Activated T-helper 2 cell treated with anti-CD3 and anti-CD28 coated beads, Interferon-gamma antibody, Interleukin-2, Interleukin-4, amounts not matched to agents 10 μg/mL and 5 μg/mL and 100 μg/mL, durations not matched to agents 14 hours and 24 hours and 36 hours (primary cell): ENCODE measurements at regions of chr11 and their contacts with region 1.

Region 1: GRCh38 chr11:119067371-119068222 is at the start of gene VPS11:
- DNase-seq: peak; percentile 98
- H3K4me3 Mint-ChIP-seq: peak within 1 kb of the TSS; percentile 92
- H3K27ac Mint-ChIP-seq: peak within 1 kb of the TSS; percentile 97
- H3K4me1 Mint-ChIP-seq: peaks cover 23% of the 10 kb centered on the region
- H3K27me3 Mint-ChIP-seq: no peaks in the 10 kb centered on the region
- total RNA-seq, gene VPS11: 24.3 and 25.8 TPM in 2 replicates

Region 2: GRCh38 chr11:118918128-118918685 is 149.4 kb before region 1 on chr11:
- intact Hi-C with region 1: no loop called
- DNase-seq: no peak
- H3K4me3 Mint-ChIP-seq: peak overlapping the region; percentile 66
- H3K27ac Mint-ChIP-seq: peak overlapping the region; percentile 93
- H3K4me1 Mint-ChIP-seq: peaks cover 77% of the 10 kb centered on the region
- H3K27me3 Mint-ChIP-seq: no peaks in the 10 kb centered on the region

Region 3: DNA sequence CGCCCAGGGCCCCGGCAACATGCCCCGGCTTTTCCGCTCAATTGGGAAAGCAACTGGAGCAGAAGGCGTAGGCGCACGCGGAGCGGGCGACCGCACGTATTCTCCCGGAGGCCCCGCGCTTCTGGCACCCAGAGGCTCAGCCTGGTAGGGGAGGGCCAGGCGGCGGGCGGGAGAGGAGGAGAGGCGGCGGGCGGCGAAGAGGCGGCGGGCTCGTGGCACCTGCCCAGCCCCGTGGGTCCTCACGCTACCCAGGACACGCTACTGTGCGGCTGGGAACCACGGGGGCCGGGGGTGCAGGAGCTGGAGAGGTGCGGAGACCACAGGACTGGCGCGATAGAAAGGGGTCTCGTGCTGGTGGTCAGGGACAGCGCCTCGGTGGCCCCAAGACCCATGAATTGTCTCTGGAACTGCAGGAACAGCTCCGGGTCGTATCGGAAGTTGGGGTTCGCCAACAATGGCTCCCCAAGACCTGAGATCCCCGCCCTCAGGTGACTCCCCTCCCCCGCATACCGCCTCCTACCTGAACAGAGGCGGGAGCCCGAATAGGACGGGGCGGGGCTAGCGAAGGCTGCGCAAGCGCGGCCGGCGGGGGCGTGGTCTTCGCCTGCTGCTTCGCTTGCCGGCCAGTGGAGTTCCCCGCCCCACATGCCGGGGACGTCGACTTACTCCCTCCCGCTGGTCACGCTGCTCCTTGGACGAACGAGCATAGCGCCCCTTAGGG is 37.1 kb before region 1 on chr11 and contains the start of gene SLC37A4:
- intact Hi-C with region 1: loop called (anchors 1 kb)
- DNase-seq: peak; percentile 98
- H3K4me3 Mint-ChIP-seq: peak within 1 kb of the TSS; percentile 75
- H3K27ac Mint-ChIP-seq: peak within 1 kb of the TSS; percentile 65
- H3K4me1 Mint-ChIP-seq: peaks cover 15% of the 10 kb centered on the region
- H3K27me3 Mint-ChIP-seq: no peaks in the 10 kb centered on the region
- total RNA-seq, gene SLC37A4: 31.7 and 34.4 TPM in 2 replicates

Region 4: DNA sequence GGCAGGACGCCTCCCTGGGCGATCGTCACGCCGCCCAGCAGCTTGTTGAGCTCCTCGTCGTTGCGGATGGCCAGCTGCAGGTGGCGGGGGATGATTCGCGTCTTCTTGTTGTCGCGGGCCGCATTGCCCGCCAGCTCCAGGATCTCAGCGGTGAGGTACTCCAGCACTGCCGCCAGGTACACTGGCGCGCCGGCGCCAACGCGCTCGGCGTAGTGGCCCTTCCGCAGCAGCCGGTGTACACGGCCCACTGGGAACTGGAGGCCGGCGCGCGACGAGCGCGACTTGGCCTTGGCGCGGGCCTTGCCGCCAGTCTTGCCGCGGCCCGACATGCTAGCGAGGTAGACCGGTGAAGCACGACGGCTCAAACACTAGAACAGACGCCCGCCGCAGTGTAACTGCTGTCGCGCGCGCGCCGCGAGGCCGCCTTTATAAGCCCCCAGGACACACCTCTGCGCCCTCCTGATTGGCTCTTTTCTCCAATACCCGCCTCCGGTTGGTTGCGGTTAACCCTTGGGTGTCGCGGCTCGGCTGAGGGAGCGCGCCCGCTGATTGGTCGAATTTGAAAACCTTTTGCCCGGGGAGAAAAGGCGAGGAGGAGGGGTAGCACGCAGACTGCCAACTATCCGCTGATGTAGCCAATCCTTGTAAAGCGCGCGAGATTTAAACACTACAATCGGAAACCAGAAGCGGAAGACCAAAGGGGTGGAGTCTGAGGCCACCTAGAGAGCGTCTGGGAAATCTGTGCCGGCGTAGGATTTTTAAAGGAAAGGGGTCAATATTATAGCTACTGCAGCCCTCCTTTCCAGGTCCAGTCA is 27.7 kb after region 1 on chr11:
- intact Hi-C with region 1: loop called (anchors 2 kb)
- DNase-seq: peak; percentile 99
- H3K4me3 Mint-ChIP-seq: peak overlapping the region; percentile 89
- H3K27ac Mint-ChIP-seq: peak overlapping the region; percentile 89
- H3K4me1 Mint-ChIP-seq: peaks cover 50% of the 10 kb centered on the region
- H3K27me3 Mint-ChIP-seq: peaks cover 2% of the 10 kb centered on the region

Region 5: GRCh38 chr11:119168471-119169281 is 101.1 kb after region 1 on chr11 and contains the start of gene NLRX1:
- intact Hi-C with region 1: loop called (anchors 1 kb)
- DNase-seq: peak; percentile 81
- H3K4me3 Mint-ChIP-seq: peak within 1 kb of the TSS; percentile 88
- H3K27ac Mint-ChIP-seq: peak within 1 kb of the TSS; percentile 89
- H3K4me1 Mint-ChIP-seq: peaks cover 16% of the 10 kb centered on the region
- H3K27me3 Mint-ChIP-seq: no peaks in the 10 kb centered on the region
- total RNA-seq, gene NLRX1: 26.4 and 31.6 TPM in 2 replicates

Region 6: DNA sequence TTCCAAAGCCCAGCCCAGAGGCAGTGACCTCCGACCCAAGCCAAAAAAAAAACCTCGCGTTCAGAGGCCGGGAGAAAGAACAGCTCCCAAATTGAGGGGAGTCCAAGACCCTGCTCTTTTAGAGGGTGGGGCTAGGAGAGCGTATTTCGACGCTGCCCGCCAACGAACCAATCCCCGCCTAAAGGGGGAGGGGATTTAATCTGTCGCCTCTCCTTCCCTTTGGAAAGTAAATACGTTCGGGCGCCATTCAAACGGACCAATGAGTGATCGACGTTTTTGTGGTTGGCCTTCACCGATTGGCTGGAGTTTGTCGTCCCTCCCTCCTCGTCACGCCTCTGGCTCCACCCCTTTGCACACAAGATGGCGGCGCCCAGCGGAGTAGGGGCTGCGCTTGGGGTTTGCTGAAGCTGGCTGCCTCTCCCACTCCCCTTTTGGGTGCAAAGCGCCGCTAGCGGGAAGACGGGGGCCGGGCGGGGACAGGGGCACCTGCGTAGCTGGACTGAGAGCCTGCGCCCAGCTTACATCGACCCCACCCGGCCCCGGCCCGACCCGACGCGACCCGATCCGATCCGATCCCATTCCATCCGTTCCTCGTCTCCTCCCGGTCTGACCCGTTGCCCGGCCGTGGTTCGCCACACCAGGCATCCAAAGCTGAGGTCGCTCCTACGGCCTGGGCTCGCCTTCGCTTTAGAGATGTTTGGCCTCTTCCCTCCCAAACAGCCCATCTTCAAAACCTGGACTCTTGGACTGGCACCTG is 266.8 kb after region 1 on chr11 and contains the start of gene RNF26:
- intact Hi-C with region 1: loop called (anchors 5 kb)
- DNase-seq: peak; percentile 93
- H3K4me3 Mint-ChIP-seq: peak within 1 kb of the TSS; percentile 100
- H3K27ac Mint-ChIP-seq: peak within 1 kb of the TSS; percentile 99
- H3K4me1 Mint-ChIP-seq: peaks cover 40% of the 10 kb centered on the region
- H3K27me3 Mint-ChIP-seq: peaks cover 22% of the 10 kb centered on the region
- total RNA-seq, gene RNF26: 29.9 and 32.6 TPM in 2 replicates